Activated naive CD4-positive, alpha-beta T cell treated with anti-CD3 and anti-CD28 coated beads, Interleukin-2, amount 10 ng/mL, durations not matched to agents 7 days and 5 days (primary cell): ENCODE measurements at regions of chr2 and their contacts with region 1.

Region 1: DNA sequence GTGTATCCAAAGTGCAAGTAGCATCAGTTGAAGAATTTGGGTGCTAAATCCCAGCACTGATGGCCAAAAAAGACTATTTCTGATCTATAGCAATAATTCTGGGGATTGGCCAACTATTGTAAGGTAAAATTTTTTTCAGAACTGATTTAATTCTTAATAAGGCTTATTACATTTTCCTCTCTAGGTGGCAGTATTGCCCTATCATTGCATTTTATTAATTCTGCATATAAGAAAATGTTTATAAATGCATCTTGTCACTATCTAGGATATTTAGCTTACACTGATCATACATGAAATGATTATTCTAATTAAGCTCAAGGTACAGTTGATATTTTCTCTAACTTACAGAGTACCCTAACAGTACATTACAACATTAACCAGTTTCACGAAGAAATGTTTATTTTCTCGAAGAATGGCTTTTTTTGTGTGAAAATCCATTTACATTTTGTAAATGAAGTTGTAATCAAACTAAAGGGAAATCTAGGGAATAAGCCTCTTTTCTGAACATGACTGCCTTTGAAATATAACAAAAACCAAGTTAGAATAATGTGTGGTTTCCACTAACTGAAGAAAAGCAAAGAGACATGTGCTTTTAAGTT is 11.0 kb downstream of the TTN start:
- DNase-seq: no peak
- H3K4me3 Mint-ChIP-seq: no peak overlapping the region
- H3K27ac Mint-ChIP-seq: no peak overlapping the region
- H3K4me1 Mint-ChIP-seq: peaks cover 3% of the 10 kb centered on the region
- H3K27me3 Mint-ChIP-seq: no peaks in the 10 kb centered on the region

Region 2: GRCh38 chr2:178811901-178812300 is 15.7 kb after region 1 on chr2:
- CTCF ChIA-PET with region 1: no interaction called
- DNase-seq: no peak
- H3K4me3 Mint-ChIP-seq: no peak overlapping the region
- H3K27ac Mint-ChIP-seq: no peak overlapping the region
- H3K4me1 Mint-ChIP-seq: no peaks in the 10 kb centered on the region
- H3K27me3 Mint-ChIP-seq: no peaks in the 10 kb centered on the region

Region 3: DNA sequence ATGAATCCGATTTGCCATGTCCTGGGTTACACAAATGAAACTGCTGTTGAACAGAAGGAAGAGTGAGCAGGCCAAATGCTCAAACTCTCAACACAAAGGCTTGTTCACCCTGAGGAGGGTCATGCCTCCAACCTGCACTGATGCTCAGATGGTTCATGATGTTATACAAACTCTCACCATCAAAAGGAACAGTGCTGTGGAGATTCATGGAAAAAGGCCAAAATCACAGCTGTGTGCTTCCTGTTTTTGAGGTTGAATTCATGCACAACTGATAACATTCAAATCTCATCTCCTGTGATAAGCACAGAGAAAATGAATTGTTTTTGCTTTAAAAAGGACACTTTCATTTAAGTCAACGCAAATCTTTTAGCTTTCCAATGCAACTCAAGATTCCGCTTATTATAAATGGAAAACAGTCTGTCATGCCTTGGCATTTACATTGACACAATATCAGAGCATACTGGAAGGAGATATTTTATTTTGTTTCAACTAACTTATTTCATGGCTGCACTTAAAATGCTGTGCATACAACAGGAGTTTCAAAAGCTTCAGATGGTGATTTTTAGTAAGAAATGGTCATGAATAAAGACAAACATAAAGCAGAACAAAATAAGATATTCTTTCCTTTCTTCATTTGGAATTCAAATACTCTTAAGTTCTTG is 33.3 kb after region 1 on chr2:
- CTCF ChIA-PET with region 1: no interaction called
- DNase-seq: no peak
- H3K4me3 Mint-ChIP-seq: no peak overlapping the region
- H3K27ac Mint-ChIP-seq: peak overlapping the region; percentile 25
- H3K4me1 Mint-ChIP-seq: peaks cover 17% of the 10 kb centered on the region
- H3K27me3 Mint-ChIP-seq: no peaks in the 10 kb centered on the region

Region 4: DNA sequence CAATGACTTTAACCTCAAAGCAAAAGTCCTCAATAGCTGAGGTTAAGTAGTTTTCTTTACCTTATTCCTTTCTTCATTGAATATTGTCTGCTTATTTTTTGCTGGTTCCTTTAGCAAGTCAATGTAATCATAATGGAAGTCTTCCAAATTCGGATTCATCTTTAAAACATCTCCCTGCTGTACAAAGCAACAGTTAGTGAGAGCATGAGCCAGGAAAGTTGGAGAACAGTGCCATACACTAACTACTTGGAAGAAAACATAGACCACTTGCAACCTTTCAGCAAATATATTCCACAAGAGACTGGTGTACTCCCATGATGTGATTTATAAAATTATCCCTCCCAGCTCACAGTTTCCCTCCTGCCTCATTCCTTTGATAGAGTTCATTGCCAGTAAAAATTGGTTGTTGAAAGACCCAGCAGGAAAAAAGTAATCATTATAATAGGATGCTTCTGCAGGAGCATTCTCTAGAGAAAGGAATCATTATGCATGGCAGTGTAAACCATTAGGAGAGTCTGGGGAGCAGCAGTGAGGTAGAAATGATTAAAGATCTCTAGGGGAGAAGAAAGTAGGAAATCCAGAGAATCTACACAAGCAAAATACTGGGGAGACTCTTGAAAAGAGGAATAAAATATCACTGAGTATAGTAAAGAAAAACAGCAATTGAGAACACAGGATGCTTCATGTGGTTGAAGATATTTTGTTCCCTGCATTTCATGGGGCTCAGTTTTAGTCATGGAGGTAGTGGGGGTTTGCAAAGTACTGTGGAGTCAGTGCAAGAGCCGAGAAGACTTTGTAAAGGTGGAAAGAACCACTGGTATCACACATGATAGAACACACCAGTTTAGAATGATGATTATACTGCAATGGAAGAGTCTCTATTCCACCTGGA is 49.6 kb after region 1 on chr2:
- CTCF ChIA-PET with region 1: interaction called, 10 read pairs
- DNase-seq: no peak
- H3K4me3 Mint-ChIP-seq: no peak overlapping the region
- H3K27ac Mint-ChIP-seq: no peak overlapping the region
- H3K4me1 Mint-ChIP-seq: no peaks in the 10 kb centered on the region
- H3K27me3 Mint-ChIP-seq: no peaks in the 10 kb centered on the region

Region 5: DNA sequence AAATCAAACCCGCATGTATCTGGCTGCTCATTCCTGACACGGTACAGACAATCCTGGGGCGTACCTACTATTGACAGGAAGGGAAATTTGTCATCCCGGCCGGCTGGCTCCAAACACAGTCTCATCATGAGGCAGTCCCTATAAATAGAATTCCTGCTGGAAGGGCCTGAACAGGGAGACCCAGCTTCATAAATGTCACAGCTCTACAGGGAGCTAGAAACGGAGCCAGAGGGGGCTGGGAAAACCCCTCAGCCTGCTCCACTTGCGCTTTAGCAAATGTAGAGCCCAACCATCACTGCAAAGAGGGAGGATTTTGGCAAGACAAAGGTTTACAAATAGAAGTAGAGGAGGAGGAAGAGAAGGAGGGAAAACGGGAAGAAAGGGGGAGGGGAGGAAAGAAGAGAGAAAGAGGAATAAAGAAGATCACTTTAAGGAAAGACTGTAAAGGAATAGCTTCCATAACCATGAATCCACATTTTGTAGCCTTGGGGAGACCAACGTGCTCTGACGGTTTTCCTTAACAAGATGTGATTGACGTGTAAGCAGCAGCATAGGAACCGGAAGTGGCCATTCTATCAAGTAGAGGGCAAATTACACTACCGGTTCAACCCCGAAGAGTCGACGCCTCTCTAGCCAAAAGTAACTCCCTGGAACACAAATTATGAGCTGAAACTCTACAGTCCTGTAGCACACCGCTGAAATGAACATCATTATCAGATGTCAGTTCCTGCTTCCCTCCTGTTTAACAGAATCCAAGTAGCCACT is 67.9 kb after region 1 on chr2:
- CTCF ChIA-PET with region 1: no interaction called
- DNase-seq: no peak
- H3K4me3 Mint-ChIP-seq: no peak overlapping the region
- H3K27ac Mint-ChIP-seq: no peak overlapping the region
- H3K4me1 Mint-ChIP-seq: peaks cover 3% of the 10 kb centered on the region
- H3K27me3 Mint-ChIP-seq: no peaks in the 10 kb centered on the region

Region 6: GRCh38 chr2:178891265-178891958 is 95.2 kb after region 1 on chr2:
- CTCF ChIA-PET with region 1: interaction called, 17 read pairs
- DNase-seq: peak; percentile 79
- H3K4me3 Mint-ChIP-seq: no peak overlapping the region
- H3K27ac Mint-ChIP-seq: no peak overlapping the region
- H3K4me1 Mint-ChIP-seq: no peaks in the 10 kb centered on the region
- H3K27me3 Mint-ChIP-seq: no peaks in the 10 kb centered on the region

Region 7: DNA sequence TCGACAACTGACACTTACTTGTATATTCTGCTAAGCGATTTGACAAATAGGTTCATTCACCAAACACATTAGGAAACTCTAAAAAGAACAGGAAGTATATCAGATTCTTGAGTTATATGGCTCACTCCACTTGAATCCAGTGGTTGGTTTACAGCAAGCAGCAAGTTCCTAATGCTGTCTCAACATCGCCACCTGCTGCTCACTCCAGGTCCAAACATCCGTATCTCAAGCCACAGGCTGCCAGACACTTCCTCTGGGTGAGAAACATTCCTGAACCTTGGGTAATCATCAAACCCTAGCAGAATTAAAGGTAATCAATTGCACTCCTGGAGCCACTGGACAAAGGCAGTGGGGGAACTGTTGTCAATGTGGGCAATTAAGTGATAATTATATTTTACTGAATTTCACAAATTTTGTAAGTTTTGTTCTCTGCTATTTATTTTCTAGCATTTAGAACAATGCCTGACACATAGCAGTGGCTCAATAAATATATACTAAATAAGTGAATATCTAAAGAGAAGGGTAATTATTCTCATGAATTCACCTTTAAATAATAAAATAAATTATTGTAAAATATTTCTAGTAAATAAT is 118.2 kb after region 1 on chr2:
- CTCF ChIA-PET with region 1: interaction called, 12 read pairs
- DNase-seq: peak; percentile 82
- H3K4me3 Mint-ChIP-seq: no peak overlapping the region
- H3K27ac Mint-ChIP-seq: no peak overlapping the region
- H3K4me1 Mint-ChIP-seq: peaks cover 11% of the 10 kb centered on the region
- H3K27me3 Mint-ChIP-seq: no peaks in the 10 kb centered on the region

Region 8: DNA sequence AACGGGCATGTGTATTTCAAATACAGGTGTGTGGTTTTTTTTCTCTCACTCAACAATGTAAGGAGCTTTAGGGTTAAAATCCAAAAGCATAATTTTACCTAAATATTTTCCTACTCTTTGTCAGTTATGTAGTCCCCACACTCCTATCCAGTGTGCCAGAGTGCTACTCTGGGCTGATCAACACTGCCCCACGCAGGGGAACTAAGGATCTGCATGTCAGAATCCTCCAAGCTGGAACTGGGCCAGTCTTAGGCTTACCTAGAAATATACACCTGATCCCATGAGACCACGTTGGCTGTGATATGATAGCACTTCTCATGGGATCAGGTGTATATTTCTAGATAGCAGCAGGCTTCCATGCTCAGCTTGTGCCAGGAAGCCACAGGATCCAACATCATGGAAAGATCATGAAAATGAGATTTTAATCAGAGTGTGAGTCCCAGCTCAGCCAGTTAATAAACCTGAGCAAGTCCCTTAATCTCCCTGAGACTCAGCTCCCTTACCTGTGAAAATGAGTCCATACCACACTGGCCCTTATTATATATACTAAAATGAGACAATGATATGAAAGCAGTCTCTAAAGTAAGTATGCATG is 224.1 kb after region 1 on chr2:
- CTCF ChIA-PET with region 1: interaction called, 13 read pairs
- DNase-seq: peak; percentile 61
- H3K4me3 Mint-ChIP-seq: no peak overlapping the region
- H3K27ac Mint-ChIP-seq: no peak overlapping the region
- H3K4me1 Mint-ChIP-seq: peaks cover 23% of the 10 kb centered on the region
- H3K27me3 Mint-ChIP-seq: no peaks in the 10 kb centered on the region